ENCODE measurements at regions of chr7 and their contacts with region 1.

Region 1: GRCh38 chr7:135170274-135170997 is at the start of gene CYREN:
- DNase-seq: peak; percentile 90
- CTCF ChIP-seq: peak; percentile 86

Region 2: GRCh38 chr7:134632937-134633540 is 537.4 kb before region 1 on chr7:
- CTCF ChIA-PET with region 1: interaction called, 13 read pairs
- POLR2A ChIA-PET with region 1: no interaction called
- DNase-seq: peak; percentile 26
- CTCF ChIP-seq: peak; percentile 61

Region 3: DNA sequence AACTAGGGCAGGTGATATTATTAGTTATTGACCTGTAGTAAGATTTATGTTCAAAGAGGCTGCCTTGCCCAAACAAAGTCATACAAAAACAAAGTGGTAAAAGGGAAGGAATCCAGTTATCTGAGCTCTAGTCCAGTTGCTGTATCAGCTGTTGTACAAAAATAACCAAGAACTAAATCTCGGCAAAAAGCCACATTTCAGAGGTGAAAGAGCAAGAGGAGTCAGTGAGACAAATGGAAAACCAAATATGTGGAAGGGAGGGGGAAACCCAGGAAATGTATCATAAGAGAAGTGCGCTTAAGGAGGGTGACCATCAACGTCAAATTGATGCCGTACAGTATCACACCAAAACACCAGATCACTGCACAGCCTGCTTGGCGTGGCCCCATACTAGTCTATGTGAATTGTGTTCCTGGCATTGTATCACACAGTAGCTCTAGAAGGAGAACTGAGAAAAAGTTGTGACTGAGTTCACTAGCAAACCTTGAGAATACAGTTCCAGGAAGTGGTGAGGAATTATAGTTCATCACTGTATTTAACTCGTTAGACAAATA is 177.7 kb before region 1 on chr7:
- CTCF ChIA-PET with region 1: interaction called, 40 read pairs
- POLR2A ChIA-PET with region 1: no interaction called
- DNase-seq: peak; percentile 61
- CTCF ChIP-seq: no peak

Region 4: GRCh38 chr7:135129580-135129979 is 40.9 kb before region 1 on chr7:
- CTCF ChIA-PET with region 1: no interaction called
- POLR2A ChIA-PET with region 1: no interaction called
- DNase-seq: no peak
- CTCF ChIP-seq: no peak

Region 5: GRCh38 chr7:135160098-135160857 is 10.2 kb before region 1 on chr7:
- CTCF ChIA-PET with region 1: interaction called, 27 read pairs
- POLR2A ChIA-PET with region 1: interaction called, 3 read pairs
- DNase-seq: no peak
- CTCF ChIP-seq: no peak

Region 6: DNA sequence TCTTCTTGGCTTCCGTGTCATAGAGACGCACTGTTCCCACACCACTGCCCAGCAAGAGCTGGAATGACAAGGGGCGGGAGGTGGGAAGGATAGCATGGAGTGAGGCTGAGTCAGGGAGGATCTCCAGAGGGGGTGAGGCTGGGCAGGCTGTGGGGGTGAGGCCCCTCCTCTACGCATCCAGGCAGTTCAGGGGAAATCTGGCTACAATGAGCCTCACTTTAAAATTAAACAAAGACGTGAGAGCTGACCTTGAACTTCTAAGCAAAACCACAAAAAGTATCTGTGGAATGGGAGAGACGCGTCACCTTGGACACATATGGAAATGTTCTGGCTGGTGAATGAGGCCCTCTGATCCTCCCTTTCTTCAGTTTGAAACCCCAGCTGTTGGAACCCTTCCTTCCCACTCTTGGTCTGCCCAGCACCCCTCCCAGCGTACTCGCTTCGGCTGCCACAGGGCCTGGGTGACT is 23.2 kb after region 1 on chr7:
- CTCF ChIA-PET with region 1: interaction called, 25 read pairs
- POLR2A ChIA-PET with region 1: no interaction called
- DNase-seq: no peak
- CTCF ChIP-seq: no peak